AG04449 (cell line): ENCODE measurements at regions of chr3 and their contacts with region 1.

Region 1: DNA sequence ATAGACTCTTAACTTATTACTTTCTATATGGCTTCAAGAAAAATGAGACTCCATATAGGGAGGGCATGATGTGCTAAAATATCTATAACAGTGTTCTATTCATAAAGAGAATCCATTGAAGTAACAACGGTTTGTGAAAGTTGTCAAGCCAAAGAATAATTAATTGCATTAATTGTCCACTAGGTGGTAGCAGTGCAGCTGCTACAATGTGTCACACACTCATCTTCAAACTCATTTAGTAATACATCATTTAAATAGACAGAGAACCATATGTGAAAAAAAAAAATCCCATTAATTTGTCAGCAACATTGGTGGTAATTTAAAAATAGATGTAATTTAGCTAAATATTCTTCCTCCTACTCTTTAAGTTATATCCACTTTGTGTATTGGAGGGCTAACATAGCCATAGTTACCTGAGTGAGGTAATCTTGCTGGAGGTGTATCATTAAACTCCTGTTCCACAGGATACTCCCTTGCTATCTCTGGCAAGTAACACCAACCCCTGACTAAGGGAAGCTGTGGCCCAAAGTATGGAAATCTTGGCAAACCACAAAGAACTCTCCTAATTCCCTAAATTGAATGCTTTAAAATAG is 3.7 kb upstream of the CPA3 start:
- DNase-seq: peak; percentile 9
- H3K4me3 ChIP-seq: no peak overlapping the region
- CTCF ChIP-seq: peak; percentile 21

Region 2: GRCh38 chr3:148727247-148727646 is 134.1 kb before region 1 on chr3:
- CTCF ChIA-PET with region 1: interaction called, 10 read pairs
- POLR2A ChIA-PET with region 1: no interaction called
- DNase-seq: no peak
- H3K4me3 ChIP-seq: no peak overlapping the region
- CTCF ChIP-seq: peak; percentile 60

Region 3: GRCh38 chr3:148880681-148881080 is 19.3 kb after region 1 on chr3:
- CTCF ChIA-PET with region 1: interaction called, 13 read pairs
- POLR2A ChIA-PET with region 1: no interaction called
- DNase-seq: no peak
- H3K4me3 ChIP-seq: no peak overlapping the region
- CTCF ChIP-seq: no peak

Region 4: DNA sequence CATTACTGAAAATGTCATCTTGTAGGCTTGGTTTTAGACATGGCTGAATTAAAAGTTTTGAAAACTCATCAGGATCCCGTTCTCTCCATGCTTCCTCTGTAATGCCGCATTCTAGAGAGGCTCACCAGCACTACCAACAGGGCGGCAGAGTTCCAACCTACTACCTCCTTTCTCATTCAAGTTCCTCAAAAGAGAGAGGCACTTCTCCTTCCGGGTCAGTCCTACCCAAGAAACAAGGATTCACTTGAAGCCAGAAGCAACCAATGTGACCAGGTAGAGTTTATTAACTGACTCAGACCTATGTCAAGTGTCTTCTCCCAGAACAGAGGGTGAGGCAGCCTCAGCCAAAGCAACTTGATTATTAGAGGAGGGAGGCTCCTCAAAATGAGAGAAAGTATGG is 70.2 kb after region 1 on chr3:
- CTCF ChIA-PET with region 1: interaction called, 13 read pairs
- POLR2A ChIA-PET with region 1: no interaction called
- DNase-seq: no peak
- H3K4me3 ChIP-seq: no peak overlapping the region
- CTCF ChIP-seq: no peak

Region 5: DNA sequence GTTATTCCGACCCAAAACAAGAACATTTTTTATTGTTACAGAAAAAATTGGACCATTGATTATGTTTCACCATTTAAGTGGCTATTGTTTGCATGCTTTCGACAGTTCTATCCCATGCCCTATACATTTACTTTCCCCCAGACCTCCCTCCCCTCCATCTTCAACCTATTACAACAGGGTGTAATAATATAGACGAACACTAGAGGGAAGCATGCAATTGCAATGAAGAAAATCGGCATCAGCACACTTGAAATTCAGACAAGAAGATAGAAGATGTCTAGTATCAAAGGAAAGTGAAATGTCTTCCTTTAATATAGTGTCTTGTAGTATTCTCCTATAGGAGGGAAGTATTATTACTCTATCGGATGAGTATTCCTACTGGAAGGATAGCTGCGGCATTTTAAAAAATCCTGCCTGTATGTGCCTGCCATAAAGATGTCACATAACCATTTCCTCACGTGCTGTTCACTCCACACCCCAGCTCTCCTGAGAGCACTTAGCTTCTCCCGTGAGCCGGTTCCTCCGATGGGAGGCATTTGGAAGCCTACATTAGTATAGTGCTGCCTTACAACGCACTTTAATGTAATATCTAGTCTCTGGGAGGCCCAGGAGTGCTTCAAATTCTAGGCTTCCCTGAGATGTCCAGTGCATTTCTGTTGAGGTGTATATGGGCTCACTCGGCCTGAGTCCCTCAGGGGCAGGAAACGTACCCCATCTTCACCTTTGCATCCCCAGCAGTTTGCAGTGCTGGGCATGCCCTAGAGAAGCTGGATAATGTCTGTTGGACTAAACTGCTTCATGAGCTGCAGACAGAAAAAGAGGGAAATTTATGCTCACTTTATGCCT is 1860.1 kb after region 1 on chr3:
- CTCF ChIA-PET with region 1: no interaction called
- POLR2A ChIA-PET with region 1: no interaction called
- DNase-seq: no peak
- H3K4me3 ChIP-seq: no peak overlapping the region
- CTCF ChIP-seq: peak; percentile 63